Activated CD4-positive, alpha-beta memory T cell treated with anti-CD3 and anti-CD28 coated beads, Interleukin-2, amount 10 ng/mL, durations not matched to agents 7 days and 5 days (primary cell): ENCODE measurements at regions of chr6 and their contacts with region 1.

Region 1: DNA sequence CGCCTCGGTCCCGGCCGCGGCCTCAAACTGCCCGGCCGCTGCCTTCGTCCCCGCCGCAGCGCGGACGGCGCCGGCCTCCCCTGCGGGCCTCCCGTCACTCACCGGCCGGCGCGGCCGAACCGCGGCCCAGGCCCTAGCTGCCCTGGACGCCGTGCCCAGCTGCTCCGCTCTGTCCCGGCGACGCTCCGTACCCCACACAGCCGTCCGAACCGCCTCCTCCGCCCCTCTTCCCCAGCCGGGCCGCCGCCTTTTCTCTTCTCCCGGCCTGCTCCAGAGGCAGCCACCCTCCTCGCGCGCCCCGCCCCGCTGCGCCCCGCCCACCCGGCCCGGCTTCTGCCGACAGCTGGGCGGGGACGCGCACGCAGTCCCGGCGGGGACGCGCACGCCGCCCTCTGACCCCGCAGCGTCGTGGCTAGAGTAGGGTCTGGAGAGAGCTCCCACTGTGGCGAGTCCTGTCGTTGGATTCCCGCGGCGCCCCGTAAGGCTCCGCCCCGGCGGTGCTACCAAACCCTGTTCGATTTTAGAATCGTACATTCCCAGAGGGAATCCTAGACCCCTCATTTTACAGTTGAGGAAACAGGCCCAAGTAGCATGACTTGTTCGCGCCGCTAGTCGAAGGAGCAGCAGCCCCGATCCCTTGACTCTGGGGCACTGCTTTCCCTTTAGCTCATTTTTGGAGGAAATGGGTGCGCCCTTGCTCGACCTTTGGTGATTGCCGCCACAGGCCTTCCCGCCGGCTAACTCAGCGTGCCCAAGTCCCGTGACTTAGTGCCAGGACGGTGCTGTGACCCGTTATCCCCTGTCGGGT is at the start of gene FBXO30:
- DNase-seq: peak; percentile 90
- H3K4me3 Mint-ChIP-seq: peak within 1 kb of the TSS; percentile 91
- H3K27ac Mint-ChIP-seq: peak within 1 kb of the TSS; percentile 88
- H3K4me1 Mint-ChIP-seq: peaks cover 29% of the 10 kb centered on the region
- H3K27me3 Mint-ChIP-seq: no peaks in the 10 kb centered on the region
- total RNA-seq, gene FBXO30: 5.0 to 5.5 TPM

Region 2: DNA sequence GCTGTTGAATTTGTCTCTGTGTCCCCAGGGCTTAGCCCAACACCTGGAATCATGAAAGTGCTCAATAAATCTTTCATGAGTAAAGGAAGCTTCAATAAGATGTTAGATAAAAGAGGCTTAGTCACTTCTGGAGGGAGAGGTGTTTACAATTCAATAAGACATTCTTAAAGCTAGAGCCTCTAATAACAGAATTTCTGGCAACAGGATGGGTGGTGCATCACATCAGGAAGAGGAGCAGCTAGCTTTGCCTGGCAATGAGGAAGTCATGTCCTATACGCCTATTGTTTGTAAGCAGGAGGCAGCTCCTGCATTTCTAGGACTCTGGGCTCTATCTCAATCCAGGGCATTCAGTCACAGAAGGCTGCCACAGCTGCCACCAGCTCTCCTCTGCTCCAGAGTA is 717.9 kb before region 1 on chr6:
- CTCF ChIA-PET with region 1: no interaction called
- POLR2A ChIA-PET with region 1: no interaction called
- DNase-seq: no peak
- H3K4me3 Mint-ChIP-seq: no peak overlapping the region
- H3K27ac Mint-ChIP-seq: no peak overlapping the region
- H3K4me1 Mint-ChIP-seq: no peaks in the 10 kb centered on the region
- H3K27me3 Mint-ChIP-seq: peaks cover 3% of the 10 kb centered on the region

Region 3: GRCh38 chr6:145866456-145867396 is 52.0 kb after region 1 on chr6:
- CTCF ChIA-PET with region 1: interaction called, 7 read pairs
- POLR2A ChIA-PET with region 1: interaction called, 21 read pairs
- DNase-seq: no peak
- H3K4me3 Mint-ChIP-seq: peak overlapping the region; percentile 30
- H3K27ac Mint-ChIP-seq: peak overlapping the region; percentile 34
- H3K4me1 Mint-ChIP-seq: peaks cover 31% of the 10 kb centered on the region
- H3K27me3 Mint-ChIP-seq: no peaks in the 10 kb centered on the region

Region 4: GRCh38 chr6:145963216-145964068 is 148.7 kb after region 1 on chr6:
- CTCF ChIA-PET with region 1: no interaction called
- POLR2A ChIA-PET with region 1: interaction called, 36 read pairs
- DNase-seq: peak; percentile 45
- H3K4me3 Mint-ChIP-seq: peak overlapping the region; percentile 94
- H3K27ac Mint-ChIP-seq: peak overlapping the region; percentile 85
- H3K4me1 Mint-ChIP-seq: peaks cover 34% of the 10 kb centered on the region
- H3K27me3 Mint-ChIP-seq: no peaks in the 10 kb centered on the region